Breast epithelium (tissue), 4 donors: ENCODE measurements at regions of chr12 and their contacts with region 1.

Region 1: GRCh38 chr12:6285063-6285477 is 25.4 kb upstream of the PLEKHG6 start:
- DNase-seq: no peak
- H3K4me3 ChIP-seq: no peak overlapping the region
- H3K27ac ChIP-seq: no peak overlapping the region
- H3K4me1 ChIP-seq: no peaks in the 10 kb centered on the region
- H3K27me3 ChIP-seq: no peaks in the 10 kb centered on the region
- CTCF ChIP-seq: peak; percentile 85 to 94 (median 92)
- POLR2A ChIP-seq: no peak

Region 2: GRCh38 chr12:6062757-6063735 is 222.0 kb before region 1 on chr12:
- intact Hi-C with region 1: loop called (anchors 10 kb)
- DNase-seq: no peak
- H3K4me3 ChIP-seq: no peak overlapping the region
- H3K27ac ChIP-seq: no peak overlapping the region
- H3K4me1 ChIP-seq: no peaks in the 10 kb centered on the region
- H3K27me3 ChIP-seq: no peaks in the 10 kb centered on the region
- CTCF ChIP-seq: peak; percentile 52 to 85 (median 82)
- POLR2A ChIP-seq: no peak

Region 3: GRCh38 chr12:6267139-6267721 is 17.8 kb before region 1 on chr12:
- intact Hi-C with region 1: no loop called
- DNase-seq: peak in 1 of 2 donors; percentile 47
- H3K4me3 ChIP-seq: no peak overlapping the region
- H3K27ac ChIP-seq: peak overlapping the region; percentile 71 to 76
- H3K4me1 ChIP-seq: no peaks in the 10 kb centered on the region
- H3K27me3 ChIP-seq: no peaks in the 10 kb centered on the region
- CTCF ChIP-seq: no peak
- POLR2A ChIP-seq: no peak

Region 4: GRCh38 chr12:7018350-7019042 is 733.4 kb after region 1 on chr12 and contains the start of gene LPCAT3:
- intact Hi-C with region 1: no loop called
- DNase-seq: peak; percentile 97
- H3K4me3 ChIP-seq: peak within 1 kb of the TSS; percentile 64 to 88 (median 86)
- H3K27ac ChIP-seq: peak within 1 kb of the TSS; percentile 96 to 97
- H3K4me1 ChIP-seq: peaks cover 0 to 8% of the 10 kb centered on the region in 2 donors
- H3K27me3 ChIP-seq: no peaks in the 10 kb centered on the region
- CTCF ChIP-seq: peak; percentile 57 to 91 (median 91)
- POLR2A ChIP-seq: peak; percentile 71
- total RNA-seq, gene LPCAT3: 28.3 to 67.5 (median 63.7) TPM